Adrenal gland (tissue), 19 donors: ENCODE measurements at regions of chr19 and their contacts with region 1.

Region 1: GRCh38 chr19:10390652-10391286 is 10.4 kb upstream of the TYK2 start:
- DNase-seq: peak; percentile 63 to 87 (median 71)
- H3K4me3 ChIP-seq: no peak overlapping the region
- H3K27ac ChIP-seq: no peak overlapping the region
- H3K4me1 ChIP-seq: peaks cover 0 to 3% of the 10 kb centered on the region in 2 donors
- H3K27me3 ChIP-seq: no peaks in the 10 kb centered on the region
- CTCF ChIP-seq: peak; percentile 64 to 80 (median 74)
- POLR2A ChIP-seq: no peak

Region 2: DNA sequence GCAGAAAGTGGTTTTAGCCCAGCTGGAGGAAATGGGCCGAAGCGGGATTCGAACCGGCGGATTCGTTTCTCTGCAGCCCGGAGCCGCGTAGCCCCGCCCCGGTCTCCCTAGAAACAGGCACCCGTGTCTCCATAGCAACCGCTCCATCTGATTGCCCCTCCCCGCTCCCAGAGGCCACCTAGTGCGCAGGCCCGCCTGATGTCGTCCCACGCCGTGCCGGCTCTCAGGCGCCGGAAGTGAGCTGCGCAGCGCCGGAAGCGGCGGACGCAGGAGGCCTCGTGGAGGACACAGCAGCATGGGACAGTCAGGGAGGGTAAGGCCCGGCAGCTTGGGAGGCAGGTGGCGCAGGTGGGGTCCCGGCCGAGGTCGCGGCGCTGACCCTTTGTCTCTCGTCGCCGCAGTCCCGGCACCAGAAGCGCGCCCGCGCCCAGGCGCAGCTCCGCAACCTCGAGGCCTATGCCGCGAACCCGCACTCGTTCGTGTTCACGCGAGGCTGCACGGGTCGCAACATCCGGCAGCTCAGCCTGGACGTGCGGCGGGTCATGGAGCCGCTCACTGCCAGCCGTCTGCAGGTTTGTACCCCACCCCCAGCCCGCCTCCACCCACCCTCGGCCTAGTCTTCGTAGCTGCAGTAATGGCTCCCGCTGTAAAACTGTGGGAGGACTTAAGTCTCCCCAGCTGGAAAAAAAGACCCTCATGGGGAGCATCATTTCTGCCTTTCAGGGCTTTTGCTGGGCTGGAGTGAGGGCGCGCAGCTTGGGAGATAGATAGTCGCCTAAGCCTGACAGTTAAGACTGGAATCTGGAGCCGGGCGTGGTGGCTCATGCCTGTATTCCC is 284.5 kb before region 1 on chr19 and contains the start of gene PPAN:
- intact Hi-C with region 1: no loop called
- DNase-seq: peak; percentile 98 to 99 (median 99)
- H3K4me3 ChIP-seq: peak within 1 kb of the TSS; percentile 59 to 75 (median 70)
- H3K27ac ChIP-seq: peak within 1 kb of the TSS in 3 of 5 donors; percentile 34 to 80 (median 53)
- H3K4me1 ChIP-seq: peaks cover 8 to 15% of the 10 kb centered on the region in 2 donors
- H3K27me3 ChIP-seq: no peaks in the 10 kb centered on the region
- CTCF ChIP-seq: no peak
- POLR2A ChIP-seq: peak in 1 of 2 donors; percentile 49
- total RNA-seq, gene PPAN: 18.2 to 44.8 (median 27.7) TPM

Region 3: GRCh38 chr19:10206226-10206885 is 184.4 kb before region 1 on chr19:
- intact Hi-C with region 1: no loop called
- DNase-seq: peak; percentile 61 to 86 (median 79)
- H3K4me3 ChIP-seq: no peak overlapping the region
- H3K27ac ChIP-seq: peak overlapping the region in 1 of 5 donors; percentile 3
- H3K4me1 ChIP-seq: no peaks in the 10 kb centered on the region
- H3K27me3 ChIP-seq: no peaks in the 10 kb centered on the region
- CTCF ChIP-seq: no peak
- POLR2A ChIP-seq: no peak

Region 4: DNA sequence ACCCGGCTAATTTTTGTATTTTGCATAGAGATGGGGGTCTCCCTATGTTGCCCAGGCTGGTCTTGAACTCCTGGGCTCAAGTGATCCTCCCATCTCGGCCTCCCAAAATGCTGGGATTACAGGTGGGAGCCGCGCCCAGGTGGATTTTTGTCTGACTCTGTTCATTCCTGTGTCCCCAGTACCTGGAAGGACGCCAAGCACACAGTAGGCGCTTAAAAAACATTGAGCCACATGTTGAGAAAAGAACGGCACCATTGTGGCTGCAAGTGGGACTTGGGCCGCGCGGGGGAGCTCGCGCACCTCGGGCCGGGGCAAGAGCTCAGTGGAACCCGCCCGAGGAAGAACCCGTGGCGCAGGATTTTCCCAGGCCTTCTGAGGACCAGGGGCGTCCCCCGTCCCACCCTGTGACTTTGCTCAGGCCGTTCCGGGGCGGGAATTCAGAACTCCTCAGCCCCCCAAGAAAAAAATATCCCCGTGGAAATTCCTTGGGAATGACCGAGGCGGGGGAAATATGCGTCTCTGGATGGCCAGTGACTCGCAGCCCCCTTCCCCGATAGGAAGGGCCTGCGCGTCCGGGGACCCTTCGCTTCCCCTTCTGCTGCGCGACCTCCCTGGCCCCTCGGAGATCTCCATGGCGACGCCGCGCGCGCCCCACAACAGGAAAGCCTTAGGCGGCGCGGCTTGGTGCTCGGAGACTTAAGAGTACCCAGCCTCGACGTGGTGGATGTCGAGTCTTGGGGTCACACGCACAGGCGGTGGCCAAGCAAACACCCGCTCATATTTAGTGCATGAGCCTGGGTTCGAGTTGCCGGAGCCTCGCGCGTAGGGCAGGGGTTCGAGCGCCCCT is 121.2 kb before region 1 on chr19:
- intact Hi-C with region 1: loop called (anchors 2 kb)
- DNase-seq: peak; percentile 79 to 92 (median 83)
- H3K4me3 ChIP-seq: peak overlapping the region in 2 of 4 donors; percentile 19 to 42
- H3K27ac ChIP-seq: peak overlapping the region; percentile 62 to 88 (median 74)
- H3K4me1 ChIP-seq: peaks cover 5 to 19% of the 10 kb centered on the region in 2 donors
- H3K27me3 ChIP-seq: no peaks in the 10 kb centered on the region
- CTCF ChIP-seq: peak; percentile 89 to 95 (median 92)
- POLR2A ChIP-seq: no peak

Region 5: DNA sequence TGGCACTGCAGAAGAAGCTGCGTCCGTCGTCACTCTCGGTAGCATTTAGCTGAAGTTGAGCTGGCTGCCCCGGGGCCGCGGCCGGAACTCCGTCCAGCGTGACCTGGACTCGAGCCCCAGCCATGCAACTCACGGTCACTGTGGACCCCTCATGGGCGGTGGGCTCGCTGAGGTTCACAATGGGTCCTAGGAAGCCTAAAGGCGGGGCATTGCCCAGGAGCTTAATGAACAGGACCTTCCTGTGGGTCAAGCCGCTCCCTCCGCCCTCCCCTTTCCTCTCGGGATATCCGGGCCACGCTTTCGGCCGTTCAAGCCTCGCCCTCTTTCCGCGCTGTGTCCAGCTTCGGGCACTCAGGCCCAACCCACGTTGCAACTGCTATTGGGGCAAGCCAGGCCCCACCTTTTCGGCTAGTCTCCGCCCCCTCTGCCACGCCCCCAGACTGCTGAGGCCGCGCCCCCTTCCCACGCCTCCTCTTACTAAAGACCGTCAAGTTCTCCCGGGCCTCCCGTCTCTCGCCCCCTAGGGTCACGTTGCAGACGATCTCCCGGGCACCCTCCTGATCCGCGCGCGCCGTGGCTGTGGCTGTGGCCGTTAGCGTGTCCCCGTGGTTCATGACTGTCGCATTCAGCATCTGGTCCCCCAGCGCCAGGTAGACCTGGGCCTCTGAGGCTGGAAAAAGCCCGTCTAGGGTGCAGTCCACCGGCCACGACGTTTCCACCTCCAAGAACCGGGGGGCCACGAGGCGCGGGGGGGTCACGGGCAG is 56.0 kb before region 1 on chr19:
- intact Hi-C with region 1: loop called in 1 of 2 experiments (anchors 5 kb)
- DNase-seq: peak; percentile 95 to 97 (median 97)
- H3K4me3 ChIP-seq: peak overlapping the region in 3 of 4 donors; percentile 25 to 84 (median 62)
- H3K27ac ChIP-seq: peak overlapping the region; percentile 39 to 94 (median 85)
- H3K4me1 ChIP-seq: peaks cover 13 to 17% of the 10 kb centered on the region in 2 donors
- H3K27me3 ChIP-seq: no peaks in the 10 kb centered on the region
- CTCF ChIP-seq: peak in 1 of 6 experiments; percentile 11
- POLR2A ChIP-seq: peak in 1 of 2 donors; percentile 85

Region 6: GRCh38 chr19:10353793-10354391 is 36.9 kb before region 1 on chr19:
- intact Hi-C with region 1: no loop called
- DNase-seq: peak; percentile 88 to 95 (median 94)
- H3K4me3 ChIP-seq: peak overlapping the region in 1 of 4 donors; percentile 36
- H3K27ac ChIP-seq: peak overlapping the region in 4 of 5 donors; percentile 76 to 96 (median 87)
- H3K4me1 ChIP-seq: peaks cover 13 to 14% of the 10 kb centered on the region in 2 donors
- H3K27me3 ChIP-seq: no peaks in the 10 kb centered on the region
- CTCF ChIP-seq: no peak
- POLR2A ChIP-seq: no peak

Region 7: DNA sequence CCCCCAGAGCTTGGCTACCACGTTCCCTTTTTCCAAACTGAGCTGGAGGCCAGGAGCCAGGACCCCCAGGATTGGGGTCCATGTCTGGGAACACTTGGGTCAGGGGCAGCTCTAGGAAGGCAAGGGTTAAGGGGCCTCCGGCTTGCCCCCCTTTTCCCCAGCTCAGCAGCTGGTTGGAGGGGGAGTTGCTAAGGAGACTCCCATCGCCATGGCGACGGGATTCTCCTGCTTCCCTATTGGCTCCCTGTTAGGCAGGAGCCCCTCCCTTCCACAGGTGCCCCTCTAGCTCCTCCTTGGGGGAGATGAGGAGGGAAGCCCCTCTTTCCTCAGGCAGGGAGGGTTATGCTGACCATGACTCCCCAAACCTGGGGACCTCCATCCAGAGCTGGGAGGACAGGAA is 63.5 kb after region 1 on chr19:
- intact Hi-C with region 1: no loop called
- DNase-seq: peak in 1 of 7 donors; percentile 40
- H3K4me3 ChIP-seq: no peak overlapping the region
- H3K27ac ChIP-seq: no peak overlapping the region
- H3K4me1 ChIP-seq: no peaks in the 10 kb centered on the region
- H3K27me3 ChIP-seq: no peaks in the 10 kb centered on the region
- CTCF ChIP-seq: no peak
- POLR2A ChIP-seq: no peak